ENCODE measurements at regions of chr9 and their contacts with region 1.

Region 1: GRCh38 chr9:127360829-127361228 is 36.1 kb upstream of the SLC2A8 start:
- DNase-seq: peak; percentile 27
- H3K4me3 ChIP-seq: no peak overlapping the region
- H3K27ac ChIP-seq: peak overlapping the region; percentile 66
- H3K4me1 ChIP-seq: peaks cover 23% of the 10 kb centered on the region
- H3K27me3 ChIP-seq: no peaks in the 10 kb centered on the region
- CTCF ChIP-seq: peak; percentile 54 to 65

Region 2: GRCh38 chr9:127388037-127388855 is 27.4 kb after region 1 on chr9:
- CTCF ChIA-PET with region 1: interaction called, 6 read pairs
- dilution Hi-C with region 1: loop called (anchors 5 kb)
- in situ Hi-C with region 1: no loop called
- intact Hi-C with region 1: loop called (anchors 2 kb)
- DNase-seq: peak; percentile 96
- H3K4me3 ChIP-seq: no peak overlapping the region
- H3K27ac ChIP-seq: no peak overlapping the region
- H3K4me1 ChIP-seq: peaks cover 16% of the 10 kb centered on the region
- H3K27me3 ChIP-seq: peaks cover 8% of the 10 kb centered on the region
- CTCF ChIP-seq: no peak

Region 3: GRCh38 chr9:127423934-127424675 is 63.3 kb after region 1 on chr9 and contains the start of gene ZNF79:
- CTCF ChIA-PET with region 1: no interaction called
- dilution Hi-C with region 1: loop called (anchors 10 kb)
- in situ Hi-C with region 1: no loop called
- intact Hi-C with region 1: loop called (anchors 1 kb)
- DNase-seq: peak; percentile 90
- H3K4me3 ChIP-seq: peak within 1 kb of the TSS; percentile 67 to 88 (median 84)
- H3K27ac ChIP-seq: peak within 1 kb of the TSS; percentile 63
- H3K4me1 ChIP-seq: peaks cover 21% of the 10 kb centered on the region
- H3K27me3 ChIP-seq: no peaks in the 10 kb centered on the region
- CTCF ChIP-seq: no peak
- total RNA-seq, gene ZNF79: 10.5 to 16.8 TPM

Region 4: DNA sequence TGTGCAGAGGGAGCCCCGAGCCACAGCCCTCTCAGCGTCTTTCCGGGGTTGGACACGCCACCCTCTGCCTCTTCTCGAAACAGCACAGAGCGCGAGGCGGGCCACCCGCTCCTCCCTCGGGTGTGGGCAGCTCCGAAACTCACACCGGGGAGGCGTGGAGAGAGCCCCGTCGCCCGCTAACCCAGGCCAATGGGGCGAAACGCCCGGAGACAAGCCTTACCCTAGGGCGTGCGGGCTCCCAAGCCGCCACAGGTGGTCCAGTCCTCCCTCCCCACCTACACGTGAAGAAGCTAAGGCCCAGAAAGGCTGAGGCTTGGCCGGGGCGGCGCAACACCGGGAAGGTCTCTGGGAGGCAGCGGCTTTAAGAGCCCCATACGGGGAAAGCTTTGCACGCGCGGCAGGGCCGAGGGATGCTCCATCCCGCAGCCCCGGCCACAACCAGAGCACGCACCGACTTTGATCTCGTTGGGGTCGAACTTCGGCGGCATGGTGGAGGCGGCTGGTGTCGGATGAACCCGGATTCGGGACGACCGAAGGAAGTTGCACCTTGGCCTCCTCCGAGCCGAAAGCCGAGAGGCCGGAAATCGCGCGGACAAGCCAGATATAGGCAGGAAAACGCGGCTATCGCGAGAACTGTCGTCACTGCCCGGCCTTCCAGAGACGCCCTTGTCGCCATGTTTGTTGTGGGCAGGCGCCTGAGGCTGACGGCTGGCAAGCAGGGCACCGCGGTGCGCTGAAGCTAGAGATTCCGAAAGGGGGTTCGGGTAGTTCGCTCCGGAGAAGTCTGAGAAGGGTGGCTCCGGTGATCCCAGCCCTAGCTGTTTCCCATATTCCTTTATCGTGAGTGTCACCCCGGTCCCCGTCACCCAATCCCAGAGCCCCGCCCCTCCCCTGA is 90.2 kb after region 1 on chr9 and contains the starts of genes LRSAM1 and RPL12:
- CTCF ChIA-PET with region 1: interaction called, 3 read pairs
- dilution Hi-C with region 1: no loop called
- in situ Hi-C with region 1: no loop called
- intact Hi-C with region 1: loop called (anchors 1 kb)
- DNase-seq: peak; percentile 90
- H3K4me3 ChIP-seq: peak within 1 kb of the TSS; percentile 79 to 91 (median 90)
- H3K27ac ChIP-seq: peak within 1 kb of the TSS; percentile 80
- H3K4me1 ChIP-seq: peaks cover 26% of the 10 kb centered on the region
- H3K27me3 ChIP-seq: no peaks in the 10 kb centered on the region
- CTCF ChIP-seq: peak in 1 of 2 donors; percentile 3
- total RNA-seq, gene LRSAM1: 15.5 to 20.6 TPM
- total RNA-seq, gene RPL12: 1,316 to 1,441 TPM

Measured in mammary epithelial cell (primary cell).